ENCODE measurements at regions of chr20 and their contacts with region 1.

Region 1: GRCh38 chr20:35092524-35093266 is at the start of gene TRPC4AP:
- DNase-seq: peak; percentile 90
- H3K4me3 Mint-ChIP-seq: peak within 1 kb of the TSS; percentile 86
- H3K27ac Mint-ChIP-seq: peak within 1 kb of the TSS; percentile 94
- H3K4me1 Mint-ChIP-seq: peaks cover 53% of the 10 kb centered on the region
- H3K27me3 Mint-ChIP-seq: no peaks in the 10 kb centered on the region
- total RNA-seq, gene TRPC4AP: 48.8 to 49.4 TPM

Region 2: GRCh38 chr20:35111141-35111888 is 18.6 kb after region 1 on chr20:
- CTCF ChIA-PET with region 1: interaction called, 11 read pairs
- POLR2A ChIA-PET with region 1: no interaction called
- DNase-seq: no peak
- H3K4me3 Mint-ChIP-seq: no peak overlapping the region
- H3K27ac Mint-ChIP-seq: no peak overlapping the region
- H3K4me1 Mint-ChIP-seq: no peaks in the 10 kb centered on the region
- H3K27me3 Mint-ChIP-seq: no peaks in the 10 kb centered on the region

Region 3: DNA sequence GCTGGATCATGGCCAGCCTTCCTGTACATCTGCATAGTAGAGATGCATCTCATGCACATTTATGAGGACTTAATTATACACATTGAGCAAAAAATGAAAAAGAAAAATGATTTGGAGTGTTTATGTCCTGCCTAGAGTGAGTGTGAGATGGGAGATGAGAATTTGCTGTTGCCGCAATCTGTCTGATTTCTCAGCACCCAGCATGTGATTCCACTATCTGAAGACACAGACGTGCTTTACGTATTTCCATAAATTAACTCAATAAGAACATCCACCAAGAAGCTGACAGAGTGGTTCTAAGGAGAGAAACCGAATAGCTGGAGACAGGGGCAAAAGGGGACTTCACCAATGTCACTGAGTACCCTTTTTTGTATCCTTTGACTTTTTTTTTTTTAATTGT is 39.2 kb after region 1 on chr20:
- CTCF ChIA-PET with region 1: no interaction called
- POLR2A ChIA-PET with region 1: interaction called, 14 read pairs
- DNase-seq: no peak
- H3K4me3 Mint-ChIP-seq: no peak overlapping the region
- H3K27ac Mint-ChIP-seq: no peak overlapping the region
- H3K4me1 Mint-ChIP-seq: no peaks in the 10 kb centered on the region
- H3K27me3 Mint-ChIP-seq: no peaks in the 10 kb centered on the region